ENCODE measurements at regions of chr16 and their contacts with region 1.

Region 1: DNA sequence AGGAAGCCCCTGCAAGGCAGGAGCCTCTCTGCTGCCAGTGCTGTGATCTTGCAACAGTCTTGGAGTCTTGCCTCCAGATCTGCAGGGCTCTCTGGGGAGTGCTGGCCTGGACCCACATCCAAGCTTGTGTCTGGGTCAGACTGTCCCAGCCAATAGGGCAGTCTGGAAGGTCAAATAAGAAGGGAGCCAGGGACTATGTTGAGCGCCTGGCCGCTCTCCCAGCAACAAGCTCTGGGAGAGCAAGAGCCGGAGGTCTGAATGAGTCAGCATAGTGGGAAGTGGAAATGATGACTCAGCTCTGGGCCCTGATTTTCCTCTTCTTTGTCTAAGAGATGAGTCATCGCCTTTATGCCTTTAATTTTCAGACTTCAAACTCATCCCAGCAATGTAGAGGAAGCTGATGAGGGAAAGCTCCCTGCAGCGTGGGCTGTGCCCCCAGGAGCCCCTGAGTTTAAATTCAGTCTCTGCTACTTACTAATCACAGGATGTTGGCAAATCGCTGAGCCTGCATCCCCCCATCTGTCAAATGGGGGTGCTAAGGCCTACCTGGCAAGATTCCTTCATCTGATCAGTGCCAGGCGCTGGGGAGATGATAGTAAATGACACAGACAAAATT is 43.6 kb upstream of the HAPSTR1 start:
- H3K4me3 ChIP-seq: no peak overlapping the region
- H3K27ac ChIP-seq: no peak overlapping the region; the same call in 1 of the 2 replicates
- H3K4me1 ChIP-seq: peaks cover 6% of the 10 kb centered on the region
- CTCF ChIP-seq: no peak

Region 2: GRCh38 chr16:8936421-8936820 is 111.4 kb before region 1 on chr16:
- CTCF ChIA-PET with region 1: no interaction called
- POLR2A ChIA-PET with region 1: no interaction called
- H3K4me3 ChIP-seq: no peak overlapping the region
- H3K27ac ChIP-seq: no peak overlapping the region
- H3K4me1 ChIP-seq: peaks cover 2% of the 10 kb centered on the region; the same call in 1 of the 2 replicates
- CTCF ChIP-seq: no peak

Region 3: GRCh38 chr16:9033125-9033830 is 14.5 kb before region 1 on chr16:
- CTCF ChIA-PET with region 1: interaction called, 14 read pairs
- POLR2A ChIA-PET with region 1: no interaction called
- H3K4me3 ChIP-seq: no peak overlapping the region
- H3K27ac ChIP-seq: no peak overlapping the region
- H3K4me1 ChIP-seq: no peaks in the 10 kb centered on the region
- CTCF ChIP-seq: no peak